HepG2 (cell line): ENCODE measurements at regions of chr16 and their contacts with region 1.

Region 1: DNA sequence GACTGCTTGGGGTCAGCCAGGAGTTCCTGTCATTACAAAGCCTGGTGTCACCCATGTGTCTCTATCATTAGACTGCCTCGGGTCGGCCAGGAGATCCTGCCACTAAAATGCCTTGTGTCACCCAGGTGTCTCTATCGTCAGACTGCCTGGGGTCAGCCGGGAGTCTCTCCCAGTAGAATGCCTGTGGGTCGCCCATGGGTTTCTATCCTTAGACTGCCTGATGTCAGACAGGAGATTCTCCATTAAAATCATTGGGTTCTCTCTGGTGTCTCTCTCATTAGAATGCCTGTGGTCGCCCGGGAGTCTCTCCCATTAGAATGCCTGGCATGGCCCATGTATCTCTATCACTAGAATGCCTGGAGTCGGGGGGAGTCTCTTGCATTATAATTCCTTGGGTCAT is 2231.0 kb downstream of the TP53TG3F start:
- DNase-seq: no peak
- ATAC-seq: no peak
- H3K4me3 ChIP-seq: no peak overlapping the region
- H3K27ac ChIP-seq: no peak overlapping the region
- H3K4me1 ChIP-seq: no peaks in the 10 kb centered on the region
- H3K27me3 ChIP-seq: no peaks in the 10 kb centered on the region
- CTCF ChIP-seq: no peak
- EP300 ChIP-seq: no peak
- POLR2A ChIP-seq: no peak
- RAD21 ChIP-seq: no peak

Region 2: DNA sequence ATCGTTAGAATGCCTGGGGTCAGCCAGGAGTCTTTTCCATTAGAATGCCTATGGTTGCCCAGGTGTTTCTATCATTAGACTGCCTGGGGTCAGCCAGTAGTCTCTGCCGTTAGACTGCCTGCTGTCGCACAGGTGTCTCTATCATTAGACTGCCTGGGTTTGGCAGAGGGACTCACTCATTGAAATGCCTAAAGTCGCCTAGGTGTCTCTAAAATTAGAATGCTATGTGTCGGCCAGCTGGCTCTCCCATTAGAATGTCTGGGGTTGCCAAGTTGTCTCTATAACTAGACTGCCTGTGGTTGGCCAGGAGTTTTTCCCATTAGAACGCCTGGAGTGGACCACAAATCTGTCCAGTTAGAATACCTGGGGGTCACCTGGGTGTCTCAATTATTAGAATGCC is 35.5 kb after region 1 on chr16:
- CTCF ChIA-PET with region 1: no interaction called
- POLR2A ChIA-PET with region 1: no interaction called
- in situ Hi-C with region 1: no loop called
- intact Hi-C with region 1: no loop called
- DNase-seq: no peak
- ATAC-seq: no peak
- H3K4me3 ChIP-seq: no peak overlapping the region
- H3K27ac ChIP-seq: no peak overlapping the region
- H3K4me1 ChIP-seq: no peaks in the 10 kb centered on the region
- H3K27me3 ChIP-seq: no peaks in the 10 kb centered on the region
- CTCF ChIP-seq: no peak
- EP300 ChIP-seq: no peak
- POLR2A ChIP-seq: no peak
- RAD21 ChIP-seq: no peak

Region 3: GRCh38 chr16:35795361-35796029 is 105.1 kb after region 1 on chr16:
- CTCF ChIA-PET with region 1: no interaction called
- POLR2A ChIA-PET with region 1: no interaction called
- in situ Hi-C with region 1: loop called (anchors 25 kb)
- intact Hi-C with region 1: no loop called
- DNase-seq: no peak
- ATAC-seq: no peak
- H3K4me3 ChIP-seq: no peak overlapping the region
- H3K27ac ChIP-seq: no peak overlapping the region
- H3K4me1 ChIP-seq: no peaks in the 10 kb centered on the region
- H3K27me3 ChIP-seq: no peaks in the 10 kb centered on the region
- CTCF ChIP-seq: no peak
- EP300 ChIP-seq: no peak
- POLR2A ChIP-seq: no peak
- RAD21 ChIP-seq: no peak